ENCODE measurements at regions of chr10 and their contacts with region 1.

Region 1: DNA sequence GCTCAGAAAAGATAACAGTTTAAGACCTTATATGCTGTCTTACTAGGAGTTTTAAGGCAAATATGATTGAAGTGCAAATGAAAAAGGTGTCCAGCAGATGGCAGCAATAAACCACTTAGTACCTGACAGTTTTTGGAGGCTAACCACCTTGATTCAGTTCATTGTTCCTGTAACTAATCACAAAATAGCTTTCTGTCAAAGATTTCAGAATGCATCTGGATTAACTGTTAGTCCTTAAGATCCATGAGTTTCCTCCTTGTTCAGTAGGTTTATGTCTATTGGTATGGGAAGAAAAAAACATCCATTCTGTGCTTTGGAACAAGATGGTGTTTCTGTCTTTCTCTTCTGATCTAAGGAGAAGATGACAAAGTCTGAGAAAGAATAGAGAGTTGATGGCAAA is 46.6 kb downstream of the CCSER2 start:
- DNase-seq: peak; percentile 22
- H3K4me3 Mint-ChIP-seq: no peak overlapping the region
- H3K27ac Mint-ChIP-seq: peak overlapping the region; percentile 12
- H3K4me1 Mint-ChIP-seq: peaks cover 30% of the 10 kb centered on the region
- H3K27me3 Mint-ChIP-seq: no peaks in the 10 kb centered on the region

Region 2: GRCh38 chr10:84429926-84430520 is 55.0 kb after region 1 on chr10:
- intact Hi-C with region 1: loop called (anchors 2 kb)
- DNase-seq: peak; percentile 29
- H3K4me3 Mint-ChIP-seq: no peak overlapping the region
- H3K27ac Mint-ChIP-seq: no peak overlapping the region
- H3K4me1 Mint-ChIP-seq: peaks cover 14% of the 10 kb centered on the region
- H3K27me3 Mint-ChIP-seq: no peaks in the 10 kb centered on the region

Region 3: GRCh38 chr10:84548869-84549268 is 173.9 kb after region 1 on chr10:
- intact Hi-C with region 1: no loop called
- DNase-seq: no peak
- H3K4me3 Mint-ChIP-seq: no peak overlapping the region
- H3K27ac Mint-ChIP-seq: no peak overlapping the region
- H3K4me1 Mint-ChIP-seq: no peaks in the 10 kb centered on the region
- H3K27me3 Mint-ChIP-seq: peaks cover 17% of the 10 kb centered on the region